Heart left ventricle (tissue), 16 donors: ENCODE measurements at regions of chr3 and their contacts with region 1.

Region 1: GRCh38 chr3:159804726-159805410 is 183.8 kb upstream of the IL12A start:
- DNase-seq: peak in 4 of 5 donors; percentile 73 to 79 (median 78)
- ATAC-seq: peak; percentile 79 to 92 (median 92)
- H3K4me3 ChIP-seq: no peak overlapping the region
- H3K27ac ChIP-seq: peak overlapping the region in 9 of 12 donors; percentile 6 to 71 (median 52)
- H3K4me1 ChIP-seq: peaks cover 3 to 75% (median 37%) of the 10 kb centered on the region in 12 donors
- H3K27me3 ChIP-seq: no peaks in the 10 kb centered on the region
- CTCF ChIP-seq: peak; percentile 73 to 94 (median 90)
- POLR2A ChIP-seq: no peak

Region 2: DNA sequence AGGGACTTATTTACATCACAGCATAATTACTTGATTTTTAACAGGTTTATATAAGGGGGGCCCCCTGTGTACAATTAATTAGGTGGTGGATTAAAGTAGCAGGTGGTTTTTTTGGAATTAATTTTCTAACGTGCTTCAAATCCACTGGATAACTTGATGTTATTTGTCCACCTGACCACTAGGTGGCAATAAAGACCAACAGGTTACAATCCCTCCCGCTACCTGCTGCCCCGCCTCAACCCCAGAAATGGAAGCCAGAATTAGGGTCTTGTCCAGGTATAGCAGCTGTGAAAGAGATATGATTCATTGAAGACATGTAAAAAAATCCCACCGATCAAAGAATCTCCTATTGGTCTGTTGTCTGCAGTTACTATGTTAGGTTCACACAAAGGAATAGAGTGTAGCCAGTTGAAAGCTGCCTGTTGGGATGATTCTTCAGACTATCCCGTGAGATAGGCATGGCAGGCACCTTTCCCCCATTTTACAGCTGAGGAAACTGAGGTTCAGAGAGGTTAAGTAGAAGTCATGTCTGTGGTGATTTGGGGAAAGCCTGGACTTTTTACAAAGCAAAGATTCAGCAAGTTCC is 959.0 kb before region 1 on chr3:
- intact Hi-C with region 1: loop called in 2 of 10 experiments (anchors 10 kb)
- DNase-seq: no peak
- ATAC-seq: no peak
- H3K4me3 ChIP-seq: no peak overlapping the region
- H3K27ac ChIP-seq: no peak overlapping the region
- H3K4me1 ChIP-seq: no peaks in the 10 kb centered on the region
- H3K27me3 ChIP-seq: no peaks in the 10 kb centered on the region
- CTCF ChIP-seq: peak; percentile 40 to 75 (median 62)
- POLR2A ChIP-seq: no peak

Region 3: DNA sequence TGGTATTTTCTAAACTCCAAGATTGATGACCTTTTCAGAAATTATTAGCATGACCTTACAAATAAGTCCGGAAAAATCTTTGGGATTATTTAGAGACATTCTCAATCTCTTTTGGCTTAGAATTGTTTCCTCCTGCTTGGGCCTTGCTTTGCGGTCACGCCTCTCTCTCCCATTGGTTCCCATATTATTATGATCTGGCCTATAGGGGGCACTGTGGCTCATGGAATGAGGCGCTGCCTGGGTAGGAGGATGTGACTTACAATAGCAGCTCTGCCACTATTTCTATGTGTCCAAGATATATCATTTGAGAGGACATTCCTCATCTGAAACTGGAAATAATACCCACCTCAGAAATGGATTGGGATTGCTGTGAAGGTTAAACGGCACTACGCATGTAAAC is 538.1 kb before region 1 on chr3:
- intact Hi-C with region 1: loop called in 9 of 10 experiments (anchors 2 to 5 kb)
- DNase-seq: no peak
- ATAC-seq: peak in 1 of 4 donors; percentile 34
- H3K4me3 ChIP-seq: no peak overlapping the region
- H3K27ac ChIP-seq: no peak overlapping the region
- H3K4me1 ChIP-seq: no peaks in the 10 kb centered on the region
- H3K27me3 ChIP-seq: no peaks in the 10 kb centered on the region
- CTCF ChIP-seq: peak in 8 of 12 donors; percentile 9 to 38 (median 32)
- POLR2A ChIP-seq: no peak

Region 4: DNA sequence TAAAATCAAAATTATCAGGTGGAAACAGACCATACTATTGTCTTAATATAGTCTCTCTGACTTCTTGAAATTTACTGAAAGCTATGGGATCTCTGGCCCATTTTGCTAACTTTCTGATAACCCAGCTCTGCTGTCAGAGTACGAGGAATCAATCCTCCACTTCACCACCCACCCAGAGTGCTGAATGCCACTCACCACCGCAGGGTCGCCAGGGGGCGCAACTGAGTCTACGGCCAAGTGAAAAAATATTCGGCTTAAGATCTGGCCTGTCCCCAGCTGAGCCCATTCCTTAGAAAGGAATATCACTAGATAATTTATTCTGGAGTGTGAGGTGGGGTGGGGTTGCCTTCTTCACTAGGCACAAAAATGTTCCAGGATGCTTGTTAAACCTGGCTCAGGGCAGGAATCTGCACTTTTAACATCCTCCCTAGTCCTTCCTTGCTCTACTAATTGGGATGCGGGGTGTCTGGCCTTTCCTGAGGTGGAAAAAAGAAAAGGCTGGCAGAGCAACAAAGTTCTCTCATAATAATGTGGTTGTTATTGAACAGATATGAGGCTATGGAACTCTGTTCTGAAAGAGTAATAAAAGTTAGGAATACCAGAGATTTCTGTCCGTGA is 482.4 kb before region 1 on chr3:
- intact Hi-C with region 1: loop called in 7 of 10 experiments (anchors 2 to 10 kb)
- DNase-seq: peak in 4 of 5 donors; percentile 12 to 62 (median 24)
- ATAC-seq: peak in 2 of 4 donors; percentile 54 to 55
- H3K4me3 ChIP-seq: no peak overlapping the region
- H3K27ac ChIP-seq: no peak overlapping the region
- H3K4me1 ChIP-seq: no peaks in the 10 kb centered on the region
- H3K27me3 ChIP-seq: no peaks in the 10 kb centered on the region
- CTCF ChIP-seq: peak; percentile 49 to 76 (median 64)
- POLR2A ChIP-seq: no peak

Region 5: DNA sequence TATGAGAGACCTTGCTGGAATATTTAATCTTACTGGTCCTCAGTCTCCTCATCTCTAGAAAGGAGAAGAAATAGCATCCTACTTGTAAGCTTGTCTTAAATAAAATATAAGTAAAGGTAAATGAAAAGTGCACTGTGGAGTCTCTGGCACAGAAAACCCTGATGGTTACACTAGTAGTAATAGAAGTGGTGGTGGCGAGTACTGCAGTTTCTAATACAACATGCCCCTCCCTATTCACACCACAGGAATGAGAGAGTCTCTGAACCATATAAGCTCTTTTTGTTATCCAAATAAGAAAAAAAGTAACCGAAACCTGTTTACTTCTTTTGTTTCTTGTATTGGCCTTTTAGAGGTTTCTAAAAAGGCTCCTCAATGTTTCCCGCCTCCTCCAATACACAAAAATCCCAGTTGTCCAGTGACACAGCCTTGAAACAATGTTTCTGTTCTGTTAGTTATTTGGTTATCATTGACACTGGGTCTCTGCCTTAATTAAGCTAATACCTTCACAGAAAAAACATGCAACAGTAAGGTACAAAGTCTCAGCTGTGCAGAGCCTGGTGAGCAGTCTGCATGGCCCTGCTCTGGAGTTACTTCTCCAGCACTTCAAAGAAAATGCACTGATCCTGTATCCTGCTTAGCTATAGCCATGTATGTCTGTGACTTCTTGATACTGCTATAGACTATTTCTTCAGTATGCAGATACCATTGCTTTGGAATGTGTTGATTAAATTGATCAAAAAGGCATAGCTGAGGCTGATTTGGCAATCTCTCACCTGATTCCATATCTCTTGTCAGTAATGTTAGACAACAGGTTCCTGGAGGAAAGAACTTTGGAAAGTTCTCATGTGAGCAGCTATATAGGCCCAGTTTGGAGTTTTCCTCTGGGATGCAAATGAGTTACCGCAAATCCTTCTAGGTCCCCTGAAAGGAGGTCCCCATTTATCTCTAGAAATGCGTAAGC is 131.9 kb before region 1 on chr3:
- intact Hi-C with region 1: loop called in 1 of 10 experiments (anchors 5 kb)
- DNase-seq: no peak
- ATAC-seq: no peak
- H3K4me3 ChIP-seq: no peak overlapping the region
- H3K27ac ChIP-seq: no peak overlapping the region
- H3K4me1 ChIP-seq: peaks cover 0 to 20% (median 7%) of the 10 kb centered on the region in 12 donors
- H3K27me3 ChIP-seq: no peaks in the 10 kb centered on the region
- CTCF ChIP-seq: peak in 2 of 12 donors; percentile 14 to 16
- POLR2A ChIP-seq: no peak